Naive thymus-derived CD4-positive, alpha-beta T cell (primary cell): ENCODE measurements at regions of chr19 and their contacts with region 1.

Region 1: GRCh38 chr19:39970675-39971379 is at the start of gene PSMC4:
- DNase-seq: peak; percentile 94 to 99 (median 98)
- ATAC-seq: peak; percentile 98
- H3K4me3 ChIP-seq: peak within 1 kb of the TSS; percentile 88
- H3K4me3 Mint-ChIP-seq: peak within 1 kb of the TSS; percentile 92 to 100 (median 94)
- H3K27ac ChIP-seq: peak within 1 kb of the TSS; percentile 95
- H3K27ac Mint-ChIP-seq: peak within 1 kb of the TSS; percentile 95 to 99 (median 97)
- H3K4me1 ChIP-seq: peaks cover 27 to 32% of the 10 kb centered on the region in 2 donors
- H3K4me1 Mint-ChIP-seq: peaks cover 39 to 61% (median 53%) of the 10 kb centered on the region in 7 donors
- H3K27me3 ChIP-seq: no peaks in the 10 kb centered on the region
- H3K27me3 Mint-ChIP-seq: no peaks in the 10 kb centered on the region
- total RNA-seq, gene PSMC4: 48.7 to 146 (median 69.1) TPM

Region 2: DNA sequence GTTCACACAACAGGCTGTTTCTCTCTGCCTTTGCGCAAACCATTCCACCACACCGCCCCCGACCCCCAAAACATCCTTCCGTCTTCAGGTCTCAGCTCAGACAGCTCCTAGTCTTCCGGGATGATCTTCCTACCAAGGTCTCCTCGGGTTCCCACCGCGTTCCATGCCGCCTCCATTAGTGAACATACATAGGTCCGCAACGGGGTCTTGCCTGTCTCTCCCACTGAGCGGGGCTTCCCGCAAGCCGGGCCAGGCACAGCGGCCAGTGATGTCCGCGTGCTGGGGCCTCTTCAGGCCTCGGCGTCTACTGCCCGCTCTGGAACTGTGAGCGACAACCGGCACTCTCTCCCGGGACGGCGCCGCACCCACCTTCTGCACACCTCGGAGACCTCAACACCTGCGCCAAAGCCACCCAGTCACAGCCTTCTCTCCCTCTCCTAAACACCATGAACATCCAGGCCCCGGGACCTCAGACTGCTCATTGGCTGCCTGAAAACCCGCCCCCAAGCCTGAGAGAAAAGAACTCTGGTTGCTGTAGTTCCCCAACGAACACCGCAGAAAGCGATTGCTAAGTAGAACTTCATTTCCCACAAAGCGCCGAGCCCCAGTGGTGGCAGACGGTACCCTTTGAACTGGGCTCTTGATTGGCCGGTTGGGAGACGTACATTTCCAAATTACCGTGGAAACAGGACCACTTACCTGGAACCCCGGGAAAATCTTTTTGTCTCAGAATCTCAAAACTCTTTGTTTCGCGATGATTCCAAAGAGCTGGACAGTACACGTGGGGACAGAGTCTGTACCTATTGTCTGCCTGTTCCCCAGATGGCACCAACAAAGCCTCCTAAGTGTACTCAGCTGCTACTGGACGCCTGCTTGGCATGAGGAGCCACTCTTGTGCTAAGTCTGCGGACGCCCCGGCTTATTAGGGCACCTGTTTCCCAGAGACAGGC is 146.4 kb before region 1 on chr19:
- CTCF ChIA-PET with region 1: no interaction called
- POLR2A ChIA-PET with region 1: interaction called, 4 read pairs
- intact Hi-C with region 1: loop called in 1 of 2 experiments (anchors 1 kb)
- DNase-seq: peak; percentile 55 to 92 (median 86)
- ATAC-seq: peak; percentile 98
- H3K4me3 ChIP-seq: peak overlapping the region; percentile 85
- H3K4me3 Mint-ChIP-seq: no peak overlapping the region
- H3K27ac ChIP-seq: peak overlapping the region; percentile 72
- H3K27ac Mint-ChIP-seq: no peak overlapping the region
- H3K4me1 ChIP-seq: peaks cover 14 to 19% of the 10 kb centered on the region in 2 donors
- H3K4me1 Mint-ChIP-seq: peaks cover 0 to 19% (median 10%) of the 10 kb centered on the region in 7 donors
- H3K27me3 ChIP-seq: no peaks in the 10 kb centered on the region
- H3K27me3 Mint-ChIP-seq: no peaks in the 10 kb centered on the region

Region 3: DNA sequence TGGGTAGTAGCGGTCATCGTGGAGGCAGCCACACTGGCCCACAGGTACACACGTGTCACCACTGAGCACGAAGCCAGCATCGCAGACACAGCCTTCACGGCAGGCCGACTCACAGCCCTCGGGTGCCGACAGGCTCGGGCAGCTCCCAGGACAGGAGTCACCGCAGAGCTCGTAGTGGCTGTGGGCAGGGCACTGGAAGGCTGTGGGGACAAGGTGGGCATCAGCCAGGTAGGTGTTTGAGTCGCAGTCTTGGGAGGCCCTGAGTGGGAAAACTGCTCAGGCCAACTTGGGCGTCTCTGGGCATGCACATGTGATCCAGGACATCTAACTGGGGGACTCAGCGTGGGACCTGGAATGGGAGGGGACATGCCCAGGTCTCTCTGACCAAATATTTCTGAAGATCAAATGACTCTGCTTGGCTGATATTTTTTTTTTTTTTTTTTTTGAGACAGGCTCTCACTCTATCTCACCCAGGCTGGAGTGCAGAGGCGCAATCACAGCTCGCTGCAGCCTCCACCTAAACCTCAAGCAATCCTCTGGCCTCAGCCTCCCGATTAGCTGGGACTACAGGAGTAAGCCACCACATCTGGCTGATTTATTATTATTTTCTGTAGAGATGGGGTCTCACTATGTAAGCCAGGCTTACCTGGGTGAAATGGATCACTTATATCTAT is 80.8 kb before region 1 on chr19:
- CTCF ChIA-PET with region 1: interaction called, 9 read pairs
- POLR2A ChIA-PET with region 1: interaction called, 3 read pairs
- intact Hi-C with region 1: loop called in 1 of 2 experiments (anchors 5 kb)
- DNase-seq: no peak
- ATAC-seq: no peak
- H3K4me3 ChIP-seq: no peak overlapping the region
- H3K4me3 Mint-ChIP-seq: no peak overlapping the region
- H3K27ac ChIP-seq: no peak overlapping the region
- H3K27ac Mint-ChIP-seq: no peak overlapping the region
- H3K4me1 ChIP-seq: no peaks in the 10 kb centered on the region
- H3K4me1 Mint-ChIP-seq: peaks cover 0 to 7% (median 4%) of the 10 kb centered on the region in 7 donors
- H3K27me3 ChIP-seq: no peaks in the 10 kb centered on the region
- H3K27me3 Mint-ChIP-seq: no peaks in the 10 kb centered on the region

Region 4: GRCh38 chr19:39924389-39924788 is 46.4 kb before region 1 on chr19:
- CTCF ChIA-PET with region 1: interaction called, 12 read pairs
- POLR2A ChIA-PET with region 1: interaction called, 5 read pairs
- intact Hi-C with region 1: no loop called
- DNase-seq: peak in 1 of 9 donors; percentile 14
- ATAC-seq: no peak
- H3K4me3 ChIP-seq: no peak overlapping the region
- H3K4me3 Mint-ChIP-seq: no peak overlapping the region
- H3K27ac ChIP-seq: no peak overlapping the region
- H3K27ac Mint-ChIP-seq: peak overlapping the region in 1 of 9 donors; percentile 21
- H3K4me1 ChIP-seq: peaks cover 0 to 8% of the 10 kb centered on the region in 2 donors
- H3K4me1 Mint-ChIP-seq: peaks cover 6 to 23% (median 17%) of the 10 kb centered on the region in 7 donors
- H3K27me3 ChIP-seq: no peaks in the 10 kb centered on the region
- H3K27me3 Mint-ChIP-seq: no peaks in the 10 kb centered on the region

Region 5: GRCh38 chr19:39996811-39997594 is 26.2 kb after region 1 on chr19 and contains the start of gene ZNF546:
- CTCF ChIA-PET with region 1: interaction called, 5 read pairs
- POLR2A ChIA-PET with region 1: interaction called, 28 read pairs
- intact Hi-C with region 1: loop called (anchors 1 kb)
- DNase-seq: peak; percentile 67 to 91 (median 90)
- ATAC-seq: peak; percentile 96
- H3K4me3 ChIP-seq: peak within 1 kb of the TSS; percentile 91
- H3K4me3 Mint-ChIP-seq: peak within 1 kb of the TSS; percentile 87 to 100 (median 95)
- H3K27ac ChIP-seq: peak within 1 kb of the TSS; percentile 85
- H3K27ac Mint-ChIP-seq: peak within 1 kb of the TSS; percentile 84 to 100 (median 95)
- H3K4me1 ChIP-seq: peaks cover 10 to 13% of the 10 kb centered on the region in 2 donors
- H3K4me1 Mint-ChIP-seq: peaks cover 20 to 56% (median 41%) of the 10 kb centered on the region in 7 donors
- H3K27me3 ChIP-seq: no peaks in the 10 kb centered on the region
- H3K27me3 Mint-ChIP-seq: no peaks in the 10 kb centered on the region
- total RNA-seq, gene ZNF546: 4.7 to 24.8 (median 7.5) TPM

Region 6: DNA sequence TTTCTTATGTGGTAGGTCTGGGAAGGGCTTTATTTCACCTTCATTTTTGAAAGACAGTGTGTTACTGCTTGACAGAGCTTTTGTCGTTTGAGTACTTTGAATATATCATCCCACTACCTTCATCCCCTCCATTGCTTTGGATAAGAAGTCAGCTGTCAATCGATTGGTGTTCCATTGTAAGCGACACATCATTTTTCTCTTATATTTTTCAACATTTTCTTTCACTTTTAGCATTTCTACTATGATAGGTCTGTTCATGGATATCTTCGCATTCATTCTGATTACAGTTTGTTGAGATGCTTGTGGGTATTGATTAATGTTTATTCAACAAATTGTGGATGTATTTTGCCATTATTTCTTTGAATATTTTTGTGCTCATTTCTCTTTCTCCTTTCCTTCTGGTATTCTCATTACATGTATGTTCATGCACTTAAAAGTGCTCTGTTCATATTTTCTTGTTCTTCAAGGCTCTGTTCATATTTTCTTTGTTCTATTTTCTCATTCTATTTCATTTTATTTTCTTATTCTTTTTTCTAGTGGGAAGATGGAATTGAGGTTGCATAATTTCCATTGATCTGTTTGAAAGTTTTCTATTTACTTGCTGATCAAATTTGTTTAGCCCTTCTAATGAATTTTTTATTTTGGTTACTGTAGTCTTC is 55.2 kb after region 1 on chr19:
- CTCF ChIA-PET with region 1: no interaction called
- POLR2A ChIA-PET with region 1: no interaction called
- intact Hi-C with region 1: no loop called
- DNase-seq: no peak
- ATAC-seq: no peak
- H3K4me3 ChIP-seq: no peak overlapping the region
- H3K4me3 Mint-ChIP-seq: no peak overlapping the region
- H3K27ac ChIP-seq: no peak overlapping the region
- H3K27ac Mint-ChIP-seq: peak overlapping the region in 1 of 9 donors; percentile 26
- H3K4me1 ChIP-seq: no peaks in the 10 kb centered on the region
- H3K4me1 Mint-ChIP-seq: peaks cover 0 to 2% (median 0%) of the 10 kb centered on the region in 7 donors
- H3K27me3 ChIP-seq: no peaks in the 10 kb centered on the region
- H3K27me3 Mint-ChIP-seq: no peaks in the 10 kb centered on the region

Region 7: DNA sequence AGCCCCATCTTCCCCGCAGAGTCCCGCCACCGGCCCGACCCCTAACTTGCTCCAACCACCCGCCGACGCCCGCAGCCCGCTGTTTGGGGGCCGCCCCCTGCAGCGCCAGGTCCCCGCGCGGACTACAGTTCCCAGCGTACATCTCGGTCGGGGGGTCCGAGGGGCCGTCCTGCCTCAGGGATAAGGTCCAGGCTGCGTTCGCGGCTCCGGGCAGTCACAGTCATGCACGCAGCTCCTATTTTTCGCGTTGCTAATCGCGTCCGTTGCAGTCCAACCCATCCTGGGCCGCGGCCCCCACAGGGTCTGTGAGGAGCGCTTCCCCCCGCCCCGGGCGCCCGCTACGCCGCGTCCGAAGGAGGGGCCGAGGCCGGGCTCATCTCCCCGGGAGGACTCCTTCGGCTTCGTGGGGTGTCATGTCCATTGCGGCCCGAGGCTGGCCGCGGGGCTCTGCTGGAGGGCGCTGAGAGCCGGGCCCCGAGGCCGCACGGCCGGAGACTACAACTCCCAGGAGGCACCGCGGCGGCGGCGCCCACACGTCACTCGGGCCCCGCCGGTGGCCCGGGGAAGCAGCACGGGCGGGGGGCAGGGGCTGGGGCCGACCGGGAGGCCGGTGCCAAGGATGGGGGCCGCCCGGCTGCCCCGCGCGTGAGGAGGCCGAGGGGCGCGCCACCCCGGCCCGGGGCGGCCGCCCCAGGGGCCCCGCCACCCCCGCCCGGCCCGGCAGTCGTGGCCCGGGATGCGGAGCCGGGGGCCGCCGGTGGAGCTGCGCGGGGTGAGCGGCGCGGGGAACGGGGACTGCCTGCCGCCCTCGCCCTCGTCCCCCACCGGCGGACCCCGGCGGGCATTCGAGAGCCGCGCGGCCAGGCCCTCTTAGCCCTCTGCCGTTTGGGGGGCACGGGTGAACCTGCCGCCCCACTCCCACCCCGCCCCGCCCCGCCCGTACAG is 220.3 kb after region 1 on chr19 and contains the start of gene MAP3K10:
- CTCF ChIA-PET with region 1: no interaction called
- POLR2A ChIA-PET with region 1: interaction called, 4 read pairs
- intact Hi-C with region 1: loop called (anchors 2 kb)
- DNase-seq: peak; percentile 50 to 84 (median 67)
- ATAC-seq: peak; percentile 95
- H3K4me3 ChIP-seq: peak within 1 kb of the TSS; percentile 97
- H3K4me3 Mint-ChIP-seq: peak within 1 kb of the TSS; percentile 76 to 92 (median 86)
- H3K27ac ChIP-seq: peak within 1 kb of the TSS; percentile 86
- H3K27ac Mint-ChIP-seq: peak within 1 kb of the TSS; percentile 53 to 94 (median 87)
- H3K4me1 ChIP-seq: peaks cover 5 to 10% of the 10 kb centered on the region in 2 donors
- H3K4me1 Mint-ChIP-seq: peaks cover 14 to 39% (median 30%) of the 10 kb centered on the region in 7 donors
- H3K27me3 ChIP-seq: no peaks in the 10 kb centered on the region
- H3K27me3 Mint-ChIP-seq: no peaks in the 10 kb centered on the region
- total RNA-seq, gene MAP3K10: 22.3 to 31.5 (median 27.0) TPM

Region 8: GRCh38 chr19:40365613-40366401 is 395.0 kb after region 1 on chr19:
- CTCF ChIA-PET with region 1: no interaction called
- POLR2A ChIA-PET with region 1: no interaction called
- intact Hi-C with region 1: no loop called
- DNase-seq: peak in 3 of 9 donors; percentile 14 to 62 (median 14)
- ATAC-seq: peak; percentile 75
- H3K4me3 ChIP-seq: no peak overlapping the region
- H3K4me3 Mint-ChIP-seq: peak overlapping the region in 8 of 10 donors; percentile 25 to 73 (median 54)
- H3K27ac ChIP-seq: no peak overlapping the region
- H3K27ac Mint-ChIP-seq: peak overlapping the region in 3 of 9 donors; percentile 21 to 44 (median 36)
- H3K4me1 ChIP-seq: no peaks in the 10 kb centered on the region
- H3K4me1 Mint-ChIP-seq: peaks cover 10 to 28% (median 16%) of the 10 kb centered on the region in 7 donors
- H3K27me3 ChIP-seq: no peaks in the 10 kb centered on the region
- H3K27me3 Mint-ChIP-seq: no peaks in the 10 kb centered on the region